ENCODE measurements at regions of chr11 and their contacts with region 1.

Region 1: GRCh38 chr11:20050551-20051333 is 109.5 kb downstream of the DBX1 start:
- DNase-seq: no peak
- ATAC-seq: no peak
- H3K4me3 ChIP-seq: no peak overlapping the region
- H3K27ac ChIP-seq: peak overlapping the region in 1 of 2 donors; percentile 22
- H3K4me1 ChIP-seq: peaks cover 5 to 9% of the 10 kb centered on the region in 2 donors
- H3K27me3 ChIP-seq: no peaks in the 10 kb centered on the region

Region 2: DNA sequence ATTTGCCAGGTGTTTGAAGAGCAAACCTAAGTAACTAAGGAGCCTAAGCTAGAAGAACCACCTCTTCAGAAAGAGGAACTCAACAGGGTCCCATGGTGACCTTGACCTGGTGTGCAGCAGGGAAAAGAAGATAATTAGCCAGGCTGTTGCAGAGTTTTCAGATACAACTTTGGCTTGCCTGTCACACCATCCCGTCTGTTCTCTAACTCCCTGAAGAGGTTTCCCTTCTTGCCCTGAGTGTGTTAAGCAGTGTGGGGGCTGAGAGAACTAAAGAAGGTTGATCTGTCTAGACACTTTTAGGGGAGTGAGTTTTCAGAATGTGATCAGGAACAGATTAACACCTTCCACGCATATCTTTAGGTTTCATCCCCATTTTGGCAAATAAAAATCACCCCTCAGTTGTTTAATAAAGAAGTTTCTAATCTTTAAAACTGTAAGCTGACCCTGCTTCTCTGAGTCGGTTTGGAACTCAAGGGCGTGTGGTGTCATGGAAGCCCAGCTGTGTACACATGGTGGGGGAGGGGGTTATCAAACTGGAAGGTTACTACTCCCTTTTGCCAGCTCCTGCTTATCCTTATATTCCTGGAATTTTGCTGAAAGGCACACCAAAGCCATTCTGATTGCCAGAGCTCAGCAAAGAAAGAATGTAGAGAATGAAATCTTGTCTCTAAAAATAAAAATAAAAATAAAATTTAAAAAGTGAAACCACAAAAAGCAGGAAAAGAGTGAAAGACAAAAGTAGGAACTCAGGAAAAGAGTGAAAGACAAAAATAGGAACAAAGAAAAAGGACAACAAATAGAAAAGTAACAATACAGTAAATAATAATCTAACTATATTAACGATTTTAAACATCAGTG is 39.3 kb after region 1 on chr11:
- intact Hi-C with region 1: loop called in 1 of 2 experiments (anchors 5 kb)
- DNase-seq: no peak
- ATAC-seq: no peak
- H3K4me3 ChIP-seq: no peak overlapping the region
- H3K27ac ChIP-seq: peak overlapping the region in 1 of 2 donors; percentile 74
- H3K4me1 ChIP-seq: peaks cover 0 to 18% of the 10 kb centered on the region in 2 donors
- H3K27me3 ChIP-seq: no peaks in the 10 kb centered on the region

Region 3: DNA sequence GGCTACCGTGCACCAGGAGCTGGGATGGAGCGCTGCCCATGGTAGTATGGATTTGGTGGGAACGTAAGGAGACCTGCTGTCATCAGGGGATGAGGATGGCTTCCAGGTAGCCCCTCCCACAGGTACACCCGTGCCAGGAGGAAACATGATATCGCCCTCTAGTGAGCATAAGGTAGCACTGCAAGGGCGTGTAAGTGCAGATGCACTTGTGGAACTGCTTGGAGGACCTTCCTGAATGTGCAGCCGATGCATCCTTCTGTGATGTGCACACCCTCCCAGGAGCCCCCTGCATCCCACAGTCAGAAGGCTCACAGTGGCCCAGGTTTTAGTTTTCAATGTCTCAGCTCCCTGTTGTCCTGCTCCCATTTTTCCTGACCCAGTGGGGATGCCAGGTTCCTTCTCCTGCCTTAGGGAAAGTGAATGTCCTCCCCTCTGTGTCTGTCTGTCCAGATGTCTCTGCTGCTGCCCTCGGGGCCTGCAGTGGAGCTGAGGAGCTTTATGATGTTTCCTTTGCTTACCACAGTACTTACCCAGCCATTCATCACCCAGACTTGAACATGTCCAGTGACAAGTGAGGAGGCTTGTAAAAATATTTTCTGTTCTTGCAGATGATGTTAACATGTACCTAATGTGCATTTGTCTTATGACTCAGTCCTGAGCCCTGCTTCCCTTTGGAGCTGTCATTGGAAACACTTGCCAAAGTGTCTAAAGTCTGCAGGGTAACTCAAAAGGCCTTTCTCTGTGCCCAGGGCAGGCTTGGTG is 60.3 kb after region 1 on chr11:
- intact Hi-C with region 1: loop called in 1 of 2 experiments (anchors 5 kb)
- DNase-seq: no peak
- ATAC-seq: peak; percentile 58
- H3K4me3 ChIP-seq: no peak overlapping the region
- H3K27ac ChIP-seq: peak overlapping the region; percentile 3 to 83
- H3K4me1 ChIP-seq: peaks cover 2 to 6% of the 10 kb centered on the region in 2 donors
- H3K27me3 ChIP-seq: no peaks in the 10 kb centered on the region